GM10248 (cell line): ENCODE measurements at regions of chr6 and their contacts with region 1.

Region 1: DNA sequence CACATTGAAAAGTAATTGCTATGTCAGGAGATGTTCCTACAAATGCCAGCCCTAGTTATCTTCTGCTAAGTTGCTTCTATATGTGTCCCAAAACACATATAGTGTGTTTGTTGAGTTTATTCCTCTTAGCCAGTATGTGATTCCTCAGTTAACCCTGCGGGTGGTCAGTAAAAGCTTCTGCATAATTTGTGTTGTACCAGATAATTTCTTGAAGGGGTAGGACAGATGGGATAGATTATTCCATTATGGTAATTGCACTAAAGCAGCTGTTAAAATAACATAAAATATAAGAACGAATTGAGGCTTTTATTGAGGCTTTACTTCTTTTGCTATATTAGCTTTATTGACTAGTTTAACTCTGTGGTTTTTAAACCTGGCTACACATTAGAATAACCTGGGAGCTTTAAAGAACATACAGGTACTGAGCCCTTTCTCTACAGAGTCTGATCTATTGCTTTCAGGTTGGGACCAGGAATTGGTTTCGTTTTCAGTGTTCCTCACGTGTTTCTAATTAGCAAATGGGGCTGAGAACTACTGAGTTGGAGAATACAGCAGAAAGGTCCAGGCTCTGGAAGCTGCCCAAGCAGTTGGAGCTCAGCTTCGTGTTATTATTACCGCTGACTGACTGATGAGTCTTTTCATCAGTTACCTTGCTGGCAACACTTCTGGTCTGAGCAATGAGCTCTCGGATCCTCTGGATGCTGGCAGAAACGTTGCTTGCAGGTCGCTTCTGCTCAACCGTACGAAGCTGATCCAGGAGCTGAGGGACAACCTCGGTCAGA is 56.9 kb downstream of the FAM229B start:
- DNase-seq: no peak
- CTCF ChIP-seq: no peak

Region 2: DNA sequence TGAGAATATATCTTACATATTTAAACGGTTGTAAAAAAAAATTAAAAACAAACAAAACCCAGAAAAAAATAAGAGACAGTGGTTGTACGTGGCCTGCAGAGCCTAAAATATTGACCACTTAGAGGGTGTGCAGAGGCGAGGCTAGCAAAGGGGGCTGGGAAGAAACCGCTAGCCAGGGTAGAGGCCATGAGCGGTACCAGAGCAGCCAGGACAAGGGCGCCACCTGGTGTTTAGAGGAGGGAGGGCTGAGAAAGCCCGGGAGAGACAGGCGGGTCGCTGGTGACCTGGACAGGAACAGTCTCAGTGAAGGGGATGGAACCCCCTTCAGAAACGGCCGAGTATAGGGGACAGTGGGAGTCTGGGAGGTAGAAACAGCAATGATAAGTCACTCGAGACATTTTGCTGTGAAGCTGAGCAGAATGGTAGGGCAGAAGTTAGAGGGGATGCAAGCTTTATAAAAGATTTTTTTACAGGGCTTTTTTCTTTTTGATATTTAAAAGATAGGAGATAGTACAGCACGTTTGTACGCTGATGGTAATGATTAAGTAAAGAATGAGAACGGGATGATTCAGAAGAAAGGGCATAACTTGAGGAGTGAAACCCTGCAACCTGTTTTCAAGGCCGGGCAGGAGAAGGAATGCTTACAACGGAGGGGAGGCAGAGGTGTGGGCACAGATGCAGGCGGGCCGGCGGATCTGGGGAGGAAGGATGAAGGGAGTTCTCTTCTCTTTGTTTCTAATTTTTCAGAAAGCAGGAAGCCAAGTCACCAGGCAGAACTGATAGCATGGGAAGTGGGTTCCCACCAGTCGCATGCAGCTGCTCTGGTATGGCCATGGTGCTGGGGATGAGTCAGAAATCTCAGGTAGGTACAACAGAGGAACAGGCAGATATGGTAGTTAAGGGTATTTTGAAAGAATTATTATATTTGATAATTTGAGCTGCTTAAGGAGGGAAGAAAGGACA is 19.2 kb after region 1 on chr6:
- CTCF ChIA-PET with region 1: interaction called, 26 read pairs
- POLR2A ChIA-PET with region 1: no interaction called
- DNase-seq: peak; percentile 78
- CTCF ChIP-seq: peak; percentile 98